ENCODE measurements at regions of chr19 and their contacts with region 1.

Region 1: GRCh38 chr19:50537762-50538230 is 24.1 kb upstream of the ASPDH start:
- DNase-seq: peak; percentile 93
- H3K4me3 ChIP-seq: peak overlapping the region in 1 of 2 experiments; percentile 22; a peak in 1 of 4 replicates
- H3K27ac ChIP-seq: no peak overlapping the region
- H3K4me1 ChIP-seq: peaks cover 0 to 3% of the 10 kb centered on the region in 2 experiments; a peak in 1 of 4 replicates
- H3K27me3 ChIP-seq: no peaks in the 10 kb centered on the region
- CTCF ChIP-seq: peak; percentile 87
- EP300 ChIP-seq: no peak
- RAD21 ChIP-seq: peak; percentile 82

Region 2: GRCh38 chr19:50325310-50326100 is 212.3 kb before region 1 on chr19:
- CTCF ChIA-PET with region 1: no interaction called
- POLR2A ChIA-PET with region 1: no interaction called
- DNase-seq: peak; percentile 100
- H3K4me3 ChIP-seq: peak overlapping the region in 1 of 2 experiments; percentile 37; a peak in 1 of 4 replicates
- H3K27ac ChIP-seq: peak overlapping the region in 1 of 2 experiments; percentile 50; a peak in 2 of 4 replicates
- H3K4me1 ChIP-seq: peaks cover 0 to 28% of the 10 kb centered on the region in 2 experiments; a peak in 1 of 4 replicates
- H3K27me3 ChIP-seq: peaks cover 16% of the 10 kb centered on the region; the same call in 1 of the 2 replicates
- CTCF ChIP-seq: no peak
- EP300 ChIP-seq: no peak
- RAD21 ChIP-seq: no peak

Region 3: GRCh38 chr19:50500060-50500752 is 37.6 kb before region 1 on chr19:
- CTCF ChIA-PET with region 1: interaction called, 11 read pairs
- POLR2A ChIA-PET with region 1: no interaction called
- DNase-seq: peak; percentile 84
- H3K4me3 ChIP-seq: no peak overlapping the region
- H3K27ac ChIP-seq: no peak overlapping the region
- H3K4me1 ChIP-seq: peaks cover 0 to 7% of the 10 kb centered on the region in 2 experiments; a peak in 1 of 4 replicates
- H3K27me3 ChIP-seq: no peaks in the 10 kb centered on the region
- CTCF ChIP-seq: peak; percentile 29
- EP300 ChIP-seq: no peak
- RAD21 ChIP-seq: no peak

Region 4: DNA sequence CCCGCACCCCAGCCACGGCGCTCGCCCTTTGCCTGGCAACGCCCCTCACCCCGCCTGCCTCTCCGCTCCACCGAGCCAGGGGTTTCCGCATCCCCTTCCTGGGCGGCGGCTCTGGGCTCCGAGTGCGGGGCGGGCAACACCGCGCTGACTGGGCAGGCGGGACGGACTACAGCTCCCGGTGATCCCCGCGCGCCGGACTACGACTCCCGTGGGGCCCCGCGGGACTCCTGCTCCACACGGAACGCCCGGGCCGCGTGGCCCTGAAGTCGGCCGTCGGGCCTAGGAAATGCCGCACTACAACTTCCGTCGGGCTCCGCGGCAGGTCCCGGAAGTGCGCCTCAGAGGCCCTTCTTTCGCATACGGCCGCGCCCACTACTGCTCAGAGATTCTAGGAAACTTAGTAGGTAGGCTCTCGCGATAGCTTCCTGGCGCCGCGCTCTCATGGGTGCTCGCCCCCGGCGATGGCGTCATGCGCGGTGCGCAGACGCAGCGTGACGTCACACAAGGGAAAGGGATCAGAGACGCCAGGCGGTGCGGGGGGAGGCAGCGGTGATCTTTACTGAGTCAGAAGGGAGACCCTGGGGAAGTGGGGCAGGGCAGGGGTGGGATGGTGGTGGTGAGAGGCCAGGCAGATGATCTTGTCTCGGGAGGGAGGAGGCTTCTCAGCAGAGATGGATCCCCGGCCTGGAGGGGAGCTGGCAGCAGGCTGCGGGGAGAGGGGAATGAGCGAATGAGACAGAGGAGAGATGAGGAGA is 26.6 kb before region 1 on chr19 and contains the start of gene JOSD2:
- CTCF ChIA-PET with region 1: interaction called, 13 read pairs
- POLR2A ChIA-PET with region 1: no interaction called
- DNase-seq: peak; percentile 94
- H3K4me3 ChIP-seq: peak within 1 kb of the TSS; percentile 83 to 88
- H3K27ac ChIP-seq: peak within 1 kb of the TSS; percentile 71 to 93; a peak in 3 of 4 replicates
- H3K4me1 ChIP-seq: peaks cover 0 to 41% of the 10 kb centered on the region in 2 experiments; a peak in 1 of 4 replicates
- H3K27me3 ChIP-seq: no peaks in the 10 kb centered on the region
- CTCF ChIP-seq: no peak
- EP300 ChIP-seq: no peak
- RAD21 ChIP-seq: no peak
- polyA plus RNA-seq, gene JOSD2: 71.5 and 81.2 TPM in 2 replicates

Region 5: GRCh38 chr19:50518091-50519005 is 19.4 kb before region 1 on chr19:
- CTCF ChIA-PET with region 1: interaction called, 38 read pairs
- POLR2A ChIA-PET with region 1: no interaction called
- DNase-seq: no peak
- H3K4me3 ChIP-seq: no peak overlapping the region
- H3K27ac ChIP-seq: no peak overlapping the region
- H3K4me1 ChIP-seq: peaks cover 0 to 20% of the 10 kb centered on the region in 2 experiments; a peak in 1 of 4 replicates
- H3K27me3 ChIP-seq: no peaks in the 10 kb centered on the region
- CTCF ChIP-seq: peak; percentile 27; the same call in 1 of the 2 replicates
- EP300 ChIP-seq: no peak
- RAD21 ChIP-seq: no peak

Region 6: DNA sequence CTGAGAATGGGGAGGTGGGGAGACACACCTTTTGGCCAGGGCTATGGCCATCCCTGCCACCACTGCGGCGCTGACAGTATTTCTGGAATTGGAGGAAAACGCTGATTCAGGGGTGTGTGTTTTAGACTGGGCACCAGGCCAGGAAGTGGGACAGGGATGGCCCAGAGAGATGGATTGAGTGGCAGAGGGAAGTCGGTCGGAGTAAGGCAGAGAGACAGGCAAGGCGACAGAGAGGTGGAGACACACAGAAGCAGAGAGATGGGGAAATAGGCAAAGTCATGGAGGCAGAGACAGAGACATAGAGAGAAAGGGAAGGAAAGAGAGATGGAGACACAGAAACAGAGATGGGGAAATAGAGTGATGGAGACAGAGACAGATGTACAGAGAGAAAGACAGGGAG is 107.3 kb after region 1 on chr19:
- CTCF ChIA-PET with region 1: no interaction called
- POLR2A ChIA-PET with region 1: no interaction called
- DNase-seq: no peak
- H3K4me3 ChIP-seq: no peak overlapping the region
- H3K27ac ChIP-seq: no peak overlapping the region
- H3K4me1 ChIP-seq: no peaks in the 10 kb centered on the region; a peak in 1 of 4 replicates
- H3K27me3 ChIP-seq: peaks cover 12% of the 10 kb centered on the region; the same call in 1 of the 2 replicates
- CTCF ChIP-seq: no peak
- EP300 ChIP-seq: no peak
- RAD21 ChIP-seq: no peak

Measured in SK-N-SH (cell line).